ENCODE measurements at regions of chr22 and their contacts with region 1.

Region 1: DNA sequence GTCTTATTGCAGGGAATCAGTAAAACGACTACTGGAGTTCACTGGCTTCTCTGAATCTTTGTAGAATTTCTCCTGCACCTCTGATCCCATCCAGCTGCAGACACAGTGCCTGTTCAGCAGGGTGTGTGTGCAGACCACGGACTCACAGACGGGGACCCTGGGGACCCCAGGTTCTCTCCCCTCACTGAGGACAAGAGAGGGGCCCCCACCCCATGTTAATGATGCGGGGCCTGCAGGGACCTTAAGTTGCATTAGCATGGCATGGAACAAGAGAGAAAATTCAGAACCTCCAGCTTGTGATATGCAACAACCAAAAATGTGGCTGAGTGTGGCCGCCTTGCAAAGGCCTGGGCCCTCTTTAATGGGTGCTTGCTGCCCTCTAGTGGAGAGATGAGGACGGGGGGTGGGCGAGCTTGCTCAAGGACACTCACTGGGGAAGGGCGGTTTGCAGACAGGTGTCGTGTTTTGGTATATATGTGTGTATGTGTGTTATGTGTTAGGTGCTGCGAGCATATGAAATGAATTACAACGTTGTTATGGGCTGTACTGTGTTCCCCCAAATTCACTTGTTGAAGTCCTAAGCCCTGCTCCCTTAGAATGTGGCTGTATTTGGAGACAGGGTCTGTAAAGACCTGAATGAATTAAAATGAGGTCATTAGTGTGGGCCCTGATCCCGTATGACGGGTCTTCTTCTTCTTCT is 84.4 kb upstream of the SEPTIN5 start:
- DNase-seq: peak; percentile 78
- ATAC-seq: peak; percentile 89
- H3K4me3 ChIP-seq: no peak overlapping the region
- H3K27ac ChIP-seq: no peak overlapping the region
- H3K4me1 ChIP-seq: no peaks in the 10 kb centered on the region
- H3K27me3 ChIP-seq: no peaks in the 10 kb centered on the region
- CTCF ChIP-seq: peak; percentile 90

Region 2: GRCh38 chr22:19568337-19569275 is 61.3 kb before region 1 on chr22:
- CTCF ChIA-PET with region 1: no interaction called
- POLR2A ChIA-PET with region 1: no interaction called
- intact Hi-C with region 1: loop called (anchors 10 kb)
- DNase-seq: peak; percentile 92
- ATAC-seq: peak; percentile 74
- H3K4me3 ChIP-seq: no peak overlapping the region
- H3K27ac ChIP-seq: peak overlapping the region; percentile 83
- H3K4me1 ChIP-seq: peaks cover 54% of the 10 kb centered on the region
- H3K27me3 ChIP-seq: no peaks in the 10 kb centered on the region
- CTCF ChIP-seq: no peak